Activated CD4-positive, alpha-beta T cell treated with anti-CD3 and anti-CD28 coated beads for 36 hours (primary cell): ENCODE measurements at regions of chr1 and their contacts with region 1.

Region 1: GRCh38 chr1:183635606-183636333 is at the start of gene ARPC5:
- DNase-seq: peak; percentile 98
- ATAC-seq: peak; percentile 90
- H3K4me3 Mint-ChIP-seq: peak within 1 kb of the TSS; percentile 97
- H3K27ac Mint-ChIP-seq: peak within 1 kb of the TSS; percentile 100
- H3K4me1 Mint-ChIP-seq: peaks cover 32% of the 10 kb centered on the region
- H3K27me3 Mint-ChIP-seq: no peaks in the 10 kb centered on the region
- total RNA-seq, gene ARPC5: 115 to 165 TPM

Region 2: GRCh38 chr1:182029379-182030331 is 1606.1 kb before region 1 on chr1:
- CTCF ChIA-PET with region 1: no interaction called
- POLR2A ChIA-PET with region 1: no interaction called
- intact Hi-C with region 1: loop called in 1 of 2 experiments (anchors 5 kb)
- DNase-seq: peak; percentile 99
- ATAC-seq: peak; percentile 96
- H3K4me3 Mint-ChIP-seq: peak overlapping the region; percentile 86
- H3K27ac Mint-ChIP-seq: peak overlapping the region; percentile 97
- H3K4me1 Mint-ChIP-seq: peaks cover 11% of the 10 kb centered on the region
- H3K27me3 Mint-ChIP-seq: no peaks in the 10 kb centered on the region

Region 3: GRCh38 chr1:183023601-183024316 is 612.0 kb before region 1 on chr1:
- CTCF ChIA-PET with region 1: no interaction called
- POLR2A ChIA-PET with region 1: no interaction called
- intact Hi-C with region 1: loop called in 1 of 2 experiments (anchors 10 kb)
- DNase-seq: peak; percentile 70
- ATAC-seq: peak; percentile 74
- H3K4me3 Mint-ChIP-seq: peak overlapping the region; percentile 58
- H3K27ac Mint-ChIP-seq: no peak overlapping the region
- H3K4me1 Mint-ChIP-seq: peaks cover 10% of the 10 kb centered on the region
- H3K27me3 Mint-ChIP-seq: peaks cover 54% of the 10 kb centered on the region

Region 4: DNA sequence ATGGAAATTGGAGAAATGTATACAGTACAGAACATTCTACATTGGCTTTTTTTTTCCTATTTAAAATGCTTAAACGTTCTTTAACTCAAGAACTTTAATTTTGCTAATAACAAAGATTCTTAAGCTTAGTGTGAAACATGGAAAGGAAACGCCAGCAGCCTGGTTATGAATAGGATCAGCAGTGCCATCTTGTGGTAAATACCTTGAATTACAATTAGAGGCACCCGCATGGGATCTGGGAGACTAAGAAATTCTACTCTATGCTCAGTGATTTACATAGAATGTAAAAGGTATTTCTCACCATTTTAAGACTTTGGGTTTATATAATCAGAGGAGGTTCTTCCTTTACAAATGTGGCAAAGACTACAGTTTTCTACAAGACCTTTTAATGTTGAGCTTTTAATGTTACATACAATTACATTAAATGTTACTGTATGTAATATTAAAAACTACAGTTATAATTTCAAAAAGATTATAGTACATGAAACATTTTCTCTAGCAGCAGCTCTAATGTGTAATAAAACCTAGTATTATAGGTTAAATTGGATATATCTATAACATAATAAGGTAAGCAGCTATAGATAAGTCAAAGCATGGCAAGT is 49.4 kb after region 1 on chr1:
- CTCF ChIA-PET with region 1: interaction called, 14 read pairs
- POLR2A ChIA-PET with region 1: no interaction called
- intact Hi-C with region 1: no loop called
- DNase-seq: peak; percentile 30
- ATAC-seq: peak; percentile 66
- H3K4me3 Mint-ChIP-seq: no peak overlapping the region
- H3K27ac Mint-ChIP-seq: no peak overlapping the region
- H3K4me1 Mint-ChIP-seq: peaks cover 7% of the 10 kb centered on the region
- H3K27me3 Mint-ChIP-seq: peaks cover 4% of the 10 kb centered on the region

Region 5: DNA sequence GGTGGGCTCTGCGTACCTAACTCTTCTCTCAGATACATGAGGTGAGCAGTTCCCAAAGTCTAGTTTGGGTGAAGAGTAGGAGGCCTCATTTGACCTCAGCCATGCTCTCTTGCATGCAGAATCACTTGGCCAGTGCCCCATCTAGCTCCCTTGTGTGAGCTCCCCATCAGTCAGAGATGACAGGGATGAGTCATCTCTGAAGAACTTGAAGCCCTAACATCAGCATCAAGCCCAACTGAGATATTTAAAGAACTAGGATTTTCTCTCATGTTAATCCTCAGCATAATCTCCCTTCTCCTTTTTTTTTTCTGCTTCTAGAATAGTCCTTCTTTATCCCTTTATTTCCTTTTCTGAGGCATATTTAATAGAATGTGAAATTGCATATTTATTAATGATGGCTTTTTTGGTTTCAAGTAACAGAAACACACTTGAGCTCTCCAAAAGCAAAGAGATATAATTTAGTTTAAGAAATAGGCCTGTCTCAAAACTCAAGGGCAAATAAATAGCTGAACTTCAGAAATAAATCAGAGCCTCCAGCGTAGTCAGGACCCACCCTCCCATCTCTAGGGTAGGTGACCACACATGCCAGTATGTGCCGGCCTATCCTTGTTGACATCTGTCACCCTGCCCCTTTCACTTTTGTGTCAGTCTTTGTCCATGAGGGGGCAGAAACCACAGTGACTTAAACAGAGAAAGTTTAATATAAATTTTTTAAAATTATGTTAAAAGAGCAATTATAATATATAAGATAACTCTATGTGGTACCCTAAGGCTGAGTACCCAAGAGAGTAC is 528.1 kb after region 1 on chr1:
- CTCF ChIA-PET with region 1: no interaction called
- POLR2A ChIA-PET with region 1: no interaction called
- intact Hi-C with region 1: loop called in 1 of 2 experiments (anchors 1 kb)
- DNase-seq: peak; percentile 30
- ATAC-seq: no peak
- H3K4me3 Mint-ChIP-seq: no peak overlapping the region
- H3K27ac Mint-ChIP-seq: no peak overlapping the region
- H3K4me1 Mint-ChIP-seq: peaks cover 3% of the 10 kb centered on the region
- H3K27me3 Mint-ChIP-seq: no peaks in the 10 kb centered on the region

Region 6: DNA sequence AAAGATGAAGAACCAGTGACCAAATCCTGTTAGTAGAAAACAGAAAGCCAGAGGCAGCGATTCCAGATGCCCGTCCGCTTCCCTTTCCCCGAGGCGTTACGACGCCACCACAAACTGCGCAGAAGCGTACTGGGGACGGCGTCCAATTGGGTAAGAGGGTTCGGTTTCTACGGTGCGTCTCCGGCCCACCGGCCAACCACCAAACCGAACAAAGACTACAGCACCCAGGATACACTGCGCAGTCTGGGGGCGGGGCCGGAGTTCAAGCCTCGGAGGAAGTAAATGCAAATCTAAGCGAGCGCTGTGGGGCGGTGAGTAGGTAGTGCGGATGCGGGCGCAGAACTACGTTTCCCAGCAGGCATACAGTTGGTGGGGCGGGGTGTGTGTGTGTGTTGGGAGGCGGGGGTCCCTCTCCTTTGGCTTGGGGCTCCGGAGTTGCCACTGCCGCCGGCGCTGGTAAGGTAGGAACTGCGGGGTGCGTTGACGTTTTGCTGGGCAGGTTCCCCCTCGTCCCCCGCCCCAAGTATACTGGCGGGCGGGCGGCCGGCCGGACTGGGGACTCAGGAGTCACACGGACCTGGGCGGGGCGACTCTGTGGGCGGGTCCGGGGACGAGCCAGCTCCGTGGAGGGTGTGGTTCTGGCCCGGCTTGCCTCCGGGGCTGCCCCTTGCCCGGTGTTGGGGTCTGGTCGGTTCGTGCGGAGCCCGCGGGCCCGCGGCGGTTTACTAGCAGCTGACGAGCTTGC is 1521.3 kb after region 1 on chr1 and contains the starts of genes SWT1 and TRMT1L:
- CTCF ChIA-PET with region 1: no interaction called
- POLR2A ChIA-PET with region 1: no interaction called
- intact Hi-C with region 1: loop called in 1 of 2 experiments (anchors 1 kb)
- DNase-seq: peak; percentile 99
- ATAC-seq: peak; percentile 94
- H3K4me3 Mint-ChIP-seq: peak within 1 kb of the TSS; percentile 91
- H3K27ac Mint-ChIP-seq: peak within 1 kb of the TSS; percentile 95
- H3K4me1 Mint-ChIP-seq: peaks cover 50% of the 10 kb centered on the region
- H3K27me3 Mint-ChIP-seq: no peaks in the 10 kb centered on the region
- total RNA-seq, gene SWT1: 3.0 to 3.3 TPM
- total RNA-seq, gene TRMT1L: 33.7 to 38.7 TPM